Left colon (tissue), 2 donors: ENCODE measurements at regions of chr6 and their contacts with region 1.

Region 1: DNA sequence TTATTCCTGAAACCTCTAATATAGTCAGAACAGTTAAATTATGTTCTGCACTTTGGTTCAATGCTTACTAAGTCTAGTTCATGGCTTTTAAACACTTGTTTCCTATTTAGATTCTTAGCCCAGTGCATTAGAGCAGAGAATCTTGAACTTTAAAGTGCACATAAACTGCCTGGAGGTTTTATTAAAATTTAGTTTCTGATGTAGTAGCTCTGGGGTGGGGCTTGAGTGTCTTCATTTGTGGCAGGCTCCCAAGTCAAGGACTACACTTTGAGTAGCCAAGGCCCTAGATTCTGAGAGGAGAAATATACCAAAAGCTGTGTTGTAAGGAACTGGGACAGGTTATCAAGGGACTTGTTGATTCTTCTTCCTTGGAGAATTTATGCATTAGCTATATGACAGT is 1604.2 kb downstream of the KHDRBS2 start:
- DNase-seq: no peak
- ATAC-seq: no peak

Region 2: DNA sequence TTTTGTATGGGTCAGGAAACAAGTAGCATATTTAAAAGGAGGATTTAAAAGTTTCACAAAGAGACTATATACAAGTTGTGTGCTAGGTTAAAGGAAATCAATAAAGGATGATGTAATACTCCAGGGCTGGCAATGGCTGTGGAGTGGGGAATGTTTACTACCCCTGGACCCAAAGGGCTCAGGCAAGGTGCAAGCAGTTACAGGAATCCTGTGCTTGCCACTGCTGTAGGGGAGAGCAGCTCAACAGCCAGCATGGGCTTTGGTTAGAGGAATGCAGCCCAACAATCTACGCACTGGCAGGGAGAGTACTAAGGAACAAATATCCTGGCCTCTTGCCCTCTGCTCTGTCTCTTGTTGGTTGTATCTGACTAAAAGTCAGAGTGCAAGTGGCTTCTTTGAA is 37.9 kb before region 1 on chr6:
- intact Hi-C with region 1: no loop called
- DNase-seq: no peak
- ATAC-seq: no peak

Region 3: DNA sequence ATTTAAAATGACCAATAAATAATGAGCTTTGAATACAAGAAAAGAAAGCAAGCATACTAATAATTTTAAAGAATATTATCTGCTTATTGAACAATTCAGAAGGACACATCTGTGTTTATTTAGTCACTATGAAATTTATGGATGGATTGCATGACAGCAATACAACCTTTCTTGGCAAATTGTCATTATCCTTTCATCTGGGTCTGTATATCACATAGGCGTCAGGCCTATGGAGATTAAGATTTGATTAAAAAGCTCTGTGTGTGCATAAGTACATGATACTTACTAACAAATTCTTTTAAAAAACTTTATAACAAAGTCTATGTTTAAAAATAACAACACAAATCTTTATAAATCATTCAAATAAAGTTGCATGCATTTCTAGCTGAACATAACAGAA is 209.8 kb after region 1 on chr6:
- intact Hi-C with region 1: loop called in 1 of 2 experiments (anchors 10 kb)
- DNase-seq: no peak
- ATAC-seq: no peak

Region 4: DNA sequence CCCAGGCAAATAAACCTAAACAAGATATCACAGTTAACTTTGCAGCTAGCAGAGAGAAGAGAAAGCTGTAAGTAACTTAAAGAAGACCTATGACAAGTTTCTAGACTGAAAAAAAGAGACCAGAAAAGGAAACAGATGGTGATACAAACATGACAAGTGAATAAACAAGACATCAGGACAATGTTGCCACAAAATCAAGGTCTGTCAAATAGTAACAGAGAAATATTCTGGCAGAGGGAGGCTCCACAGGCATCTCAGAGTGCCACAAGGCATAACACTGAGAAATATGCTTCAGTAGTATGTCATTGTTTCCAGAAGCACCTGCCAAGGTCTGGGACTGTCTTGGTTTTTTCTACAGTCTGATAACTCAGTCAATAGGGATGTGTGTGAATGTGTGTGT is 1272.0 kb after region 1 on chr6:
- intact Hi-C with region 1: no loop called
- DNase-seq: no peak
- ATAC-seq: no peak